Heart left ventricle (tissue), 16 donors: ENCODE measurements at regions of chr12 and their contacts with region 1.

Region 1: GRCh38 chr12:73136386-73136785 is 864.2 kb downstream of the TRHDE start:
- DNase-seq: no peak
- ATAC-seq: no peak
- H3K4me3 ChIP-seq: no peak overlapping the region
- H3K27ac ChIP-seq: no peak overlapping the region
- H3K4me1 ChIP-seq: no peaks in the 10 kb centered on the region
- H3K27me3 ChIP-seq: no peaks in the 10 kb centered on the region
- CTCF ChIP-seq: no peak
- POLR2A ChIP-seq: no peak

Region 2: GRCh38 chr12:72723732-72724131 is 412.7 kb before region 1 on chr12:
- intact Hi-C with region 1: loop called in 1 of 10 experiments (anchors 10 kb)
- DNase-seq: no peak
- ATAC-seq: no peak
- H3K4me3 ChIP-seq: no peak overlapping the region
- H3K27ac ChIP-seq: no peak overlapping the region
- H3K4me1 ChIP-seq: no peaks in the 10 kb centered on the region
- H3K27me3 ChIP-seq: no peaks in the 10 kb centered on the region
- CTCF ChIP-seq: no peak
- POLR2A ChIP-seq: no peak

Region 3: DNA sequence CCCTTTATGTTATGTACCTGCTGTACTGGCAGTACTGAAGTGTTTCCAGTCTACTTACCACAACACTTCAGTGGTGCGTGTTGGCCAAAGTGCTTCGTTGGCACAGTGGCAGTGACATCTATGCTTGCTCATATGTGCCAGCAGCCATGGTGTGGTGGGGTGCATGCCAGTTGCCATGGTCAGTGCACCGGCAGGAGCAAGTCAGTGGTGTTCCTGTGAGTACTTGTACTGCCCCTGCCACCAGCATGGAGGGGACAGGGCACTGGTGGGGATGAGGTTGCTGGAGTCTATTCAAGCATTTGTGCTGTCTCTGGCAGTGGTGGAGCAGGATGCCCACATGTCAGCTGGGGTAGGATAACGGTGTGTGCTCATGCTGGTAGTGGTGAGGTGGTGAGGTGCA is 64.2 kb before region 1 on chr12:
- intact Hi-C with region 1: no loop called
- DNase-seq: no peak
- ATAC-seq: no peak
- H3K4me3 ChIP-seq: no peak overlapping the region
- H3K27ac ChIP-seq: no peak overlapping the region
- H3K4me1 ChIP-seq: no peaks in the 10 kb centered on the region
- H3K27me3 ChIP-seq: no peaks in the 10 kb centered on the region
- CTCF ChIP-seq: no peak
- POLR2A ChIP-seq: no peak

Region 4: DNA sequence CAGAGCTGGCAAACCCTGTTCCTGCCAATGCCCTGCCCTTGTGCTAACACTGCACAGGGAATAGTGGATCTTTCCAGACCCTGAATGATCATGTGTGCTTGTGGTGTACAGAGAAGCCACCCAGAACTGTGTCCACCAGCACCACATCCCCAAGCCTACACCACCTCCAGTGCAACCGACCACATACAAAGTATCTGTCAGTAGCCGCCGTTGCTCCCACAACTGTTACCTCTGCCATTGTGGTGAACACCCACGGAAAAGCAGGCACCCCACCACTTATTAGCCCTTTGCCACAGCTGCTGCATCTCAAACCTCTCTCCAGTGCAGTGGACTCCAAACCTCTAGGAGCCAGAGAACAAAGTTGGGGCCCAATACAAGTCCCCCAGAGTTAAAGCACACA is 185.4 kb after region 1 on chr12:
- intact Hi-C with region 1: no loop called
- DNase-seq: peak in 1 of 5 donors; percentile 31
- ATAC-seq: no peak
- H3K4me3 ChIP-seq: no peak overlapping the region
- H3K27ac ChIP-seq: no peak overlapping the region
- H3K4me1 ChIP-seq: no peaks in the 10 kb centered on the region
- H3K27me3 ChIP-seq: no peaks in the 10 kb centered on the region
- CTCF ChIP-seq: no peak
- POLR2A ChIP-seq: no peak